CD14-positive monocyte (primary cell): ENCODE measurements at regions of chr17 and their contacts with region 1.

Region 1: DNA sequence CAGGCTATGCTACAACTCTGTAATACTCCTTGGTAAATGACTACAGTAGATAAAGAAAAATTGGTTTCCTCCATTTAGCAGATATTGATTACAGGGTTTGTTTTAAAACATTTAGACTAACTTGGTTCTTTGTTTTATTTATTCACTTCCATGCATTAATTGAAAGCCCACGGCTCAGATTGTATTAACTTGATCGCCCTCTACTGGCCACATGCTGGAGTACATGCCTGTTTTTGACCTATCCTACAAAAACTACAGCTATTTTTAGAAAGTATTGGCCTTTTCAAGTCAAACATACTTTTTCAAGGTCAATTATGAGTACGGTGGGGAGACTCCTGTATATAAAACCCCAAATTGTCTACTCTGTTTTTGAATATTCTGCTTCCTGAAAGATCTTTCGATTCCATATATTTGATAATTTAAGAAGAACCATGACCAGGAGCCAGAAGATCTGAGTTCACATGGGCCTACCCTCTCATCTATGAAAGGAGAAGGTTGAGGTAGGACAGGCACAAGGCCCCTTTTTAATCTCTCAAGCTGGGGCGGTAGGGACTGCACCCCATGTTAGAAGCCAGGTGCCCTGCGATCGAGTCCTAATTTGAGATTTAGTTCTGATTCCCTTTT is 51.8 kb downstream of the CA10 start:
- DNase-seq: peak in 2 of 3 donors; percentile 9 to 12
- H3K4me3 ChIP-seq: no peak overlapping the region
- H3K4me3 Mint-ChIP-seq: no peak overlapping the region
- H3K27ac ChIP-seq: no peak overlapping the region
- H3K27ac Mint-ChIP-seq: no peak overlapping the region
- H3K4me1 ChIP-seq: no peaks in the 10 kb centered on the region
- H3K4me1 Mint-ChIP-seq: no peaks in the 10 kb centered on the region
- H3K27me3 ChIP-seq: no peaks in the 10 kb centered on the region
- H3K27me3 Mint-ChIP-seq: peaks cover 0 to 9% (median 2%) of the 10 kb centered on the region in 3 donors
- CTCF ChIP-seq: peak; percentile 83

Region 2: GRCh38 chr17:51371732-51372151 is 735.0 kb before region 1 on chr17:
- intact Hi-C with region 1: loop called in 1 of 2 experiments (anchors 10 kb)
- DNase-seq: peak in 2 of 3 donors; percentile 36 to 56
- H3K4me3 ChIP-seq: no peak overlapping the region
- H3K4me3 Mint-ChIP-seq: peak overlapping the region in 1 of 2 donors; percentile 35
- H3K27ac ChIP-seq: no peak overlapping the region
- H3K27ac Mint-ChIP-seq: peak overlapping the region in 2 of 7 donors; percentile 26 to 28
- H3K4me1 ChIP-seq: peaks cover 14 to 28% of the 10 kb centered on the region in 2 donors
- H3K4me1 Mint-ChIP-seq: peaks cover 34% of the 10 kb centered on the region
- H3K27me3 ChIP-seq: peaks cover 0 to 2% of the 10 kb centered on the region in 2 donors
- H3K27me3 Mint-ChIP-seq: peaks cover 2 to 18% (median 4%) of the 10 kb centered on the region in 3 donors
- CTCF ChIP-seq: peak; percentile 36